Mammary epithelial cell (primary cell): ENCODE measurements at regions of chr4 and their contacts with region 1.

Region 1: GRCh38 chr4:140130677-140131076 is 23.3 kb downstream of the MAML3 start:
- DNase-seq: peak; percentile 93
- H3K4me3 ChIP-seq: no peak overlapping the region
- H3K27ac ChIP-seq: peak overlapping the region; percentile 58
- H3K4me1 ChIP-seq: peaks cover 13% of the 10 kb centered on the region
- H3K27me3 ChIP-seq: no peaks in the 10 kb centered on the region
- CTCF ChIP-seq: no peak

Region 2: GRCh38 chr4:140028676-140029517 is 101.8 kb before region 1 on chr4:
- CTCF ChIA-PET with region 1: no interaction called
- dilution Hi-C with region 1: no loop called
- in situ Hi-C with region 1: no loop called
- intact Hi-C with region 1: no loop called
- DNase-seq: no peak
- H3K4me3 ChIP-seq: no peak overlapping the region
- H3K27ac ChIP-seq: no peak overlapping the region
- H3K4me1 ChIP-seq: no peaks in the 10 kb centered on the region
- H3K27me3 ChIP-seq: no peaks in the 10 kb centered on the region
- CTCF ChIP-seq: no peak

Region 3: GRCh38 chr4:140042634-140043033 is 88.0 kb before region 1 on chr4:
- CTCF ChIA-PET with region 1: no interaction called
- dilution Hi-C with region 1: no loop called
- in situ Hi-C with region 1: no loop called
- intact Hi-C with region 1: no loop called
- DNase-seq: no peak
- H3K4me3 ChIP-seq: no peak overlapping the region
- H3K27ac ChIP-seq: no peak overlapping the region
- H3K4me1 ChIP-seq: peaks cover 18% of the 10 kb centered on the region
- H3K27me3 ChIP-seq: no peaks in the 10 kb centered on the region
- CTCF ChIP-seq: no peak

Region 4: DNA sequence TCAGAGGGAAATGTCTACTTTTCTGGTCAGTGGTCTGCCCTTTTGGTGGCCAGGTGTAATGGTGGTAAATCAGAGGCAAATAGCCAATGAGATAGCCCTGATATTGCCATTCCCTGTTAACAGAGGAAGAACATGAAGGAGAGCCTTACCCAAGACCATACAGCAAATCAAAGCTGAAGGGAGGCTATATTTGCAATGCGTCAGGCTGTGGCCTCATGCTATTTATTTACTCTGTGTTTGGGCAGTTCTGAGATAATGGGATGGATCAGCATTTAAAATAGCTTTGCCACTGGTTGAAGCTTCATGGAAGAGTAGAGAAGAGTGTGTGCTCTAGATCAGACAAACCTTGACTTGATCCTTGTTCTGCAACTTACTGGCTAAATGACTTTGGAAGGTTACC is 96.6 kb after region 1 on chr4:
- CTCF ChIA-PET with region 1: no interaction called
- dilution Hi-C with region 1: loop called (anchors 5 kb)
- in situ Hi-C with region 1: no loop called
- intact Hi-C with region 1: no loop called
- DNase-seq: no peak
- H3K4me3 ChIP-seq: no peak overlapping the region
- H3K27ac ChIP-seq: no peak overlapping the region
- H3K4me1 ChIP-seq: peaks cover 3% of the 10 kb centered on the region
- H3K27me3 ChIP-seq: no peaks in the 10 kb centered on the region
- CTCF ChIP-seq: no peak